Heart left ventricle (tissue), 16 donors: ENCODE measurements at regions of chr3 and their contacts with region 1.

Region 1: GRCh38 chr3:124504332-124505059 is 225.8 kb upstream of the UMPS start:
- DNase-seq: peak in 4 of 5 donors; percentile 19 to 64 (median 39)
- ATAC-seq: peak; percentile 72 to 94 (median 88)
- H3K4me3 ChIP-seq: no peak overlapping the region
- H3K27ac ChIP-seq: peak overlapping the region in 2 of 12 donors; percentile 1 to 54
- H3K4me1 ChIP-seq: peaks cover 0 to 14% (median 6%) of the 10 kb centered on the region in 12 donors
- H3K27me3 ChIP-seq: no peaks in the 10 kb centered on the region
- CTCF ChIP-seq: no peak
- POLR2A ChIP-seq: no peak

Region 2: GRCh38 chr3:124535306-124535705 is 30.8 kb after region 1 on chr3:
- intact Hi-C with region 1: loop called in 1 of 10 experiments (anchors 5 kb)
- DNase-seq: no peak
- ATAC-seq: no peak
- H3K4me3 ChIP-seq: no peak overlapping the region
- H3K27ac ChIP-seq: no peak overlapping the region
- H3K4me1 ChIP-seq: peaks cover 0 to 5% (median 0%) of the 10 kb centered on the region in 12 donors
- H3K27me3 ChIP-seq: no peaks in the 10 kb centered on the region
- CTCF ChIP-seq: no peak
- POLR2A ChIP-seq: no peak

Region 3: DNA sequence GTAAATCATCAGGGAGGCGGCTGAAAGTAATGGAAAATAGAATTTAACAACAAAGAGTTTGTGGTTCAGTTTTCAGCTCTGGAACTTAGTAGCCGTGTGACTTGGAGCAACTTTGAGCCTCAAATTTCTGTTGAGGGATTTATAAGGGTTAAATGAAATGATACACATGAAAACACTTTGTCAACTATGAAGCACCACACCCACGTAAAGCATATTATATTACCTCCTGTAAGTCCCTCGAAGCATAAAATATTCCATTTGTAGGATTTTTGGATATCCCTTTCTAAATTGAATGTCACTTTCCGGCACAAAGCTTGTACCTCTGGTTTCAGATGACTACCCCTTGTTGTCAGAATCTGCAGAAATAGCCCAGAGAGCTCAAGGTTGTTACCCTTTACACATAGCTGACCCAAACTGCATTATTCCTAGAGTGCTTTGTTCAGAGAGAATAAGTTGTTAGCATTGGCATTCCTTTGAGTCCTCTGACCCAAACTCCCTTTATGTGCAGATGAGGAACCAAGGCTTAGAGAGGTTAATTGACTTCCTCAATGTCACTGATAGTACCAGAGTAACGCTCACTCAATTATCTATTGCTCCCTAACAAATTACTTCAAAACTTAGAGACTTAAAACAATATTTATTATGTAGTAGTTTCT is 37.8 kb after region 1 on chr3:
- intact Hi-C with region 1: loop called in 2 of 10 experiments (anchors 5 kb)
- DNase-seq: no peak
- ATAC-seq: no peak
- H3K4me3 ChIP-seq: no peak overlapping the region
- H3K27ac ChIP-seq: no peak overlapping the region
- H3K4me1 ChIP-seq: peaks cover 0 to 9% (median 0%) of the 10 kb centered on the region in 12 donors
- H3K27me3 ChIP-seq: no peaks in the 10 kb centered on the region
- CTCF ChIP-seq: no peak
- POLR2A ChIP-seq: no peak